Heart left ventricle (tissue), 16 donors: ENCODE measurements at regions of chr18 and their contacts with region 1.

Region 1: DNA sequence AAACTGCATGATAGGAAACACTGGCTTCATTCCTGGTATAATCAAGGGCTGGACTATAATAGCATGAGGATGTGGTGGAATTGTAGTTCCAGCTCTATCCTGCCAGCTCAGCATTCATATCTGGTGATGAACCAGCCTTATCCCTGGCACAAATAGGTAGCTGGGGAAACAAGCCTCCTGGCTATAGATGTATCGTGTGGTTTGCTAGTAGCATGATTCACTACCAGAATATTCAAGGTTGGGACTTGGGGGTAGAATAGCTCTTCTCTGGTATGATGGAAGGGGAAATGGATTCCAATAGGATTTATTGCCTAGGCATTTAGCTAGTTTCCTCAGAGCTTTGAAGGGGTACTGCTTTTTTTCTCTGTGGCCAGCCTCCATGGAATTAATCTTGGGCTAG is 532.8 kb downstream of the FBXO15 start:
- DNase-seq: no peak
- ATAC-seq: no peak
- H3K4me3 ChIP-seq: no peak overlapping the region
- H3K27ac ChIP-seq: no peak overlapping the region
- H3K4me1 ChIP-seq: no peaks in the 10 kb centered on the region
- H3K27me3 ChIP-seq: no peaks in the 10 kb centered on the region
- CTCF ChIP-seq: no peak
- POLR2A ChIP-seq: no peak

Region 2: DNA sequence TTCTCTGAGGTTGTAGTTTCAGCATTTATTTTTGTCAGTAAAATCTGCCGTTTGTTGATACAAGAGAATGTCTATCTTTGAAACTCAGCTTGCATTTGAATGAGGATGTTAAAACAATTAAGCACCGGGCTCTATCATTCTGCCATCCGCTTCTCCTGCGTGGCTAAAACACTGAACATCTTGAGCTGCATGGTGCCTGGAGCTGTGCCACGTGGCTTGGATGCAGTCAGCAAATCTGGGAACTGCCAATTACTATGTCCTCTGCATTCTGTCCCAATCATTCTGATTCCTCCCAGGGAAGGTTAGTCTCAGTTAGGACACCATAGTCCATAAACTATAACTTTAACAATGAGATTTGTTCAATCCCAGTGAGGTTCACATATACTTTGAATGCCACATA is 65.6 kb before region 1 on chr18:
- intact Hi-C with region 1: no loop called
- DNase-seq: no peak
- ATAC-seq: no peak
- H3K4me3 ChIP-seq: no peak overlapping the region
- H3K27ac ChIP-seq: no peak overlapping the region
- H3K4me1 ChIP-seq: no peaks in the 10 kb centered on the region
- H3K27me3 ChIP-seq: no peaks in the 10 kb centered on the region
- CTCF ChIP-seq: no peak
- POLR2A ChIP-seq: no peak

Region 3: DNA sequence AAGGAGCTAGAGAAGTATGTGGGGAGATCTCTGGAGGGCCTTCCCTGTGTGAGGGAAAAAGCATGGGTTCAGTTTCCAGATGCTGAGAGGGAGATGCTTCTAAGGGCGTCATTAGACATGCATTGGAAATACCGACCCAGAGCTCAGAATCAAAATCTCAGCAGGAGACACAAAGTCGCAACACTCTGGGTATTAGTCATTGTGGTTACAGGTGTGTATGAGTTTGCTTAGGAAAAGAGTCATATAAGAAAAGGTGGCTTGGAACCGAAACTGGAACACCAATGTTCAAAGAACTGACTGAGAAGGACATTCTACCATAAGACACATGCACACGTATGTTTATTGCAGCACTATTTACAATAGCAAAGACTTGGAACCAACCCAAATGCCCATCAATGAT is 55.7 kb after region 1 on chr18:
- intact Hi-C with region 1: loop called in 1 of 10 experiments (anchors 10 kb)
- DNase-seq: no peak
- ATAC-seq: no peak
- H3K4me3 ChIP-seq: no peak overlapping the region
- H3K27ac ChIP-seq: no peak overlapping the region
- H3K4me1 ChIP-seq: no peaks in the 10 kb centered on the region
- H3K27me3 ChIP-seq: no peaks in the 10 kb centered on the region
- CTCF ChIP-seq: no peak
- POLR2A ChIP-seq: no peak

Region 4: GRCh38 chr18:73766910-73767515 is 152.2 kb after region 1 on chr18:
- intact Hi-C with region 1: no loop called
- DNase-seq: no peak
- ATAC-seq: no peak
- H3K4me3 ChIP-seq: no peak overlapping the region
- H3K27ac ChIP-seq: no peak overlapping the region
- H3K4me1 ChIP-seq: no peaks in the 10 kb centered on the region
- H3K27me3 ChIP-seq: no peaks in the 10 kb centered on the region
- CTCF ChIP-seq: no peak
- POLR2A ChIP-seq: no peak